Sciatic nerve (tissue), 2 donors: ENCODE measurements at regions of chr21 and their contacts with region 1.

Region 1: DNA sequence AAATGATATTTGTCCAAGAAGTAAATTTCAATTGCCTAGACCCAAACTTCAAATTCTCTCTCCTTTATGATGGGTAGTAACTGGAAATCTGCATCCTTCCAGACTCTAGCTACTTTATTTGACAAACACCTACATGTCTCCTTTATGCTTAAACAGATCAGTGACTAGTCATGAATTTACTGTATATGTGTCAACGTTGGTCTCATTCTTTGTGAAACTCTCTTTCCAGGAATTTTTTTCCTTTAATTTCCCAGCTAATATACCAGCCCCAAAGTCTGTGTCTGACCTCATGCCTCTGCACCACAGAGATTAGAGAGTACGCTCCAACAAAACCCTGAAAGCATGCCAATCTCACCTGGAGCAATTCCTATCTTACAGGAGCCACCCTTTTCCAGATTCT is 811.2 kb upstream of the NCAM2 start:
- DNase-seq: no peak
- ATAC-seq: no peak

Region 2: GRCh38 chr21:18553786-18554185 is 1633.2 kb before region 1 on chr21:
- intact Hi-C with region 1: loop called (anchors 5 kb)
- DNase-seq: no peak
- ATAC-seq: no peak

Region 3: GRCh38 chr21:19501115-19501514 is 685.9 kb before region 1 on chr21:
- intact Hi-C with region 1: no loop called
- DNase-seq: no peak
- ATAC-seq: no peak

Region 4: GRCh38 chr21:20215959-20216358 is 28.9 kb after region 1 on chr21:
- intact Hi-C with region 1: no loop called
- DNase-seq: no peak
- ATAC-seq: no peak